Gastrocnemius medialis (tissue), 4 donors: ENCODE measurements at regions of chr1 and their contacts with region 1.

Region 1: GRCh38 chr1:221741711-221742554 is at the start of gene DUSP10:
- DNase-seq: peak; percentile 99 to 100
- ATAC-seq: peak; percentile 85 to 89
- H3K4me3 ChIP-seq: peak within 1 kb of the TSS; percentile 71 to 93 (median 82)
- H3K27ac ChIP-seq: peak within 1 kb of the TSS; percentile 95 to 99 (median 98)
- H3K4me1 ChIP-seq: peaks cover 44 to 45% of the 10 kb centered on the region in 2 donors
- H3K27me3 ChIP-seq: no peaks in the 10 kb centered on the region
- CTCF ChIP-seq: peak in 1 of 5 experiments; percentile 14
- POLR2A ChIP-seq: peak; percentile 65 to 95
- total RNA-seq, gene DUSP10: 2.9 to 7.0 (median 5.9) TPM

Region 2: GRCh38 chr1:220879076-220879508 is 862.8 kb before region 1 on chr1 and contains the start of gene HLX:
- in situ Hi-C with region 1: no loop called
- intact Hi-C with region 1: loop called (anchors 10 kb)
- DNase-seq: peak; percentile 87 to 88
- ATAC-seq: peak; percentile 92
- H3K4me3 ChIP-seq: peak within 1 kb of the TSS; percentile 70 to 96 (median 94)
- H3K27ac ChIP-seq: peak within 1 kb of the TSS; percentile 87 to 94 (median 90)
- H3K4me1 ChIP-seq: peaks cover 8 to 21% of the 10 kb centered on the region in 2 donors
- H3K27me3 ChIP-seq: no peaks in the 10 kb centered on the region
- CTCF ChIP-seq: peak in 1 of 5 experiments; percentile 16
- POLR2A ChIP-seq: peak; percentile 66 to 86
- total RNA-seq, gene HLX: 3.5 to 8.3 (median 6.4) TPM

Region 3: DNA sequence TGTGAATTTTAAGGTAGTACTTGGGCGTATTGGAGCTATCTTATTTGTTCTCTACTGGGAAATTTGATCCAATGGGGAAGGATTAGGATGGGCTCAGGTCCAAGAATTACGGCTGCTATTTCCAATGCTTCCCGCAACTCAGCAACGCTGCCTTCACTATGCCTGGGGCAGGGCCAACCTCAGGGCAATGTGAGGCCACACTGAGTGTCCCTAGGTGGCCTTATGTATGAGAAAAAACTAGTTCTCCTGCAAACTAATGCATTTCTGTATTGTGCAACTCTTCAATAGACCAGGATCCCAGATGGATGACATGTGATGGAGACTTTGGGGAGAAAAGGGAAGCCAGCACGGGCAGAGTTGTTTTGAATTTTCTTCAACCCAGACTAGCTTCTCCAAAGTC is 168.2 kb before region 1 on chr1:
- in situ Hi-C with region 1: loop called in 1 of 4 experiments (anchors 25 kb)
- intact Hi-C with region 1: no loop called
- DNase-seq: peak; percentile 20 to 26
- ATAC-seq: peak in 1 of 2 donors; percentile 56
- H3K4me3 ChIP-seq: no peak overlapping the region
- H3K27ac ChIP-seq: no peak overlapping the region
- H3K4me1 ChIP-seq: peaks cover 10 to 14% of the 10 kb centered on the region in 2 donors
- H3K27me3 ChIP-seq: no peaks in the 10 kb centered on the region
- CTCF ChIP-seq: no peak
- POLR2A ChIP-seq: no peak

Region 4: GRCh38 chr1:221697923-221698425 is 44.0 kb before region 1 on chr1:
- in situ Hi-C with region 1: no loop called
- intact Hi-C with region 1: no loop called
- DNase-seq: peak in 1 of 2 donors; percentile 27
- ATAC-seq: peak; percentile 86
- H3K4me3 ChIP-seq: no peak overlapping the region
- H3K27ac ChIP-seq: peak overlapping the region; percentile 3 to 53 (median 36)
- H3K4me1 ChIP-seq: peaks cover 0 to 12% of the 10 kb centered on the region in 2 donors
- H3K27me3 ChIP-seq: no peaks in the 10 kb centered on the region
- CTCF ChIP-seq: no peak
- POLR2A ChIP-seq: no peak

Region 5: DNA sequence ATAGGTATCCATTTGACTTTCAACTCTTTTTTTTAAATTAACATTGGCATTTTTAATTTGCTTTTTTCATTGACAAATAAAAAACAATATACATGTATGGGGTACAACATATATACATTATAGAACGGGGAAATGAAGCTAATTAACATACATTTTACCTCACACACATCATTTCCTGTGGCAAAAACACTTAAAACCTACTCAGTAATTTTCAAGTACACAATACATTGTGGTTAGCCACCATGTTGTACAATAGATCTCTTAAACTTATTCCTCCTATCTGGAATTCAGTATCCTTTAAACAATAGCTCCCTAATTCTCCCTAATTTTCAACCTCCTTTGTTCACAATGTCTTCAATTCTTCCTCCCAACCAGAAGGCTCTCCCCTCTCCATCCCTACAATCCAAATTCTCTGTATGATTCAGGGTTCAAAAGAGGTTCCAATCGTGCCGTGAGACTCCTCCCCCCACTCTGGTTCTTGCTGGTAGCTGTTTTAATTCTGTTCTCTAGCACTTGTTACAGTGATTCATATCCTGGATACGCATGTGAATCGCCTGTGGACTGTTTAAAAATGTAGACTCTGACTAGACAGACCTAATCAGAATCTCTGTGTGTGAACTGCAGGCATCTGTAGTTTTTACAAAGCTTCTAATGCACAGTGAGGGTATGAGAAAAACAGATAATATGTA is 87.5 kb after region 1 on chr1:
- in situ Hi-C with region 1: no loop called
- intact Hi-C with region 1: no loop called
- DNase-seq: no peak
- ATAC-seq: no peak
- H3K4me3 ChIP-seq: no peak overlapping the region
- H3K27ac ChIP-seq: no peak overlapping the region
- H3K4me1 ChIP-seq: peaks cover 6 to 7% of the 10 kb centered on the region in 2 donors
- H3K27me3 ChIP-seq: no peaks in the 10 kb centered on the region
- CTCF ChIP-seq: no peak
- POLR2A ChIP-seq: no peak

Region 6: GRCh38 chr1:221845650-221846371 is 103.9 kb after region 1 on chr1:
- in situ Hi-C with region 1: no loop called
- intact Hi-C with region 1: loop called (anchors 2 kb)
- DNase-seq: peak; percentile 33 to 62
- ATAC-seq: peak; percentile 92 to 93
- H3K4me3 ChIP-seq: peak overlapping the region in 1 of 4 donors; percentile 9
- H3K27ac ChIP-seq: peak overlapping the region; percentile 33 to 70 (median 54)
- H3K4me1 ChIP-seq: peaks cover 0 to 16% of the 10 kb centered on the region in 2 donors
- H3K27me3 ChIP-seq: no peaks in the 10 kb centered on the region
- CTCF ChIP-seq: no peak
- POLR2A ChIP-seq: no peak

Region 7: GRCh38 chr1:222043444-222044292 is 301.7 kb after region 1 on chr1:
- in situ Hi-C with region 1: no loop called
- intact Hi-C with region 1: loop called (anchors 2 kb)
- DNase-seq: peak in 1 of 2 donors; percentile 38
- ATAC-seq: peak; percentile 22 to 27
- H3K4me3 ChIP-seq: no peak overlapping the region
- H3K27ac ChIP-seq: peak overlapping the region; percentile 66 to 89 (median 76)
- H3K4me1 ChIP-seq: peaks cover 35 to 48% of the 10 kb centered on the region in 2 donors
- H3K27me3 ChIP-seq: no peaks in the 10 kb centered on the region
- CTCF ChIP-seq: no peak
- POLR2A ChIP-seq: no peak

Region 8: GRCh38 chr1:222465211-222466041 is 723.5 kb after region 1 on chr1:
- in situ Hi-C with region 1: loop called in 2 of 4 experiments (anchors 25 kb)
- intact Hi-C with region 1: no loop called
- DNase-seq: peak; percentile 70 to 84
- ATAC-seq: peak; percentile 94 to 96
- H3K4me3 ChIP-seq: peak overlapping the region; percentile 48 to 60 (median 54)
- H3K27ac ChIP-seq: peak overlapping the region; percentile 69 to 86 (median 82)
- H3K4me1 ChIP-seq: peaks cover 0 to 4% of the 10 kb centered on the region in 2 donors
- H3K27me3 ChIP-seq: no peaks in the 10 kb centered on the region
- CTCF ChIP-seq: peak; percentile 89 to 100 (median 100)
- POLR2A ChIP-seq: peak in 1 of 2 donors; percentile 13